ENCODE measurements at regions of chr14 and their contacts with region 1.

Region 1: GRCh38 chr14:61461808-61462275 is 140.5 kb downstream of the PRKCH start:
- DNase-seq: no peak
- H3K4me3 ChIP-seq: no peak overlapping the region
- H3K27ac ChIP-seq: no peak overlapping the region
- H3K4me1 ChIP-seq: no peaks in the 10 kb centered on the region
- H3K27me3 ChIP-seq: peaks cover 0 to 11% (median 0%) of the 10 kb centered on the region in 3 donors
- CTCF ChIP-seq: peak; percentile 64 to 76 (median 74)
- EP300 ChIP-seq: no peak
- POLR2A ChIP-seq: no peak

Region 2: GRCh38 chr14:61730756-61731373 is 269.0 kb after region 1 on chr14:
- intact Hi-C with region 1: loop called (anchors 5 kb)
- DNase-seq: no peak
- H3K4me3 ChIP-seq: no peak overlapping the region
- H3K27ac ChIP-seq: no peak overlapping the region
- H3K4me1 ChIP-seq: no peaks in the 10 kb centered on the region
- H3K27me3 ChIP-seq: no peaks in the 10 kb centered on the region
- CTCF ChIP-seq: peak in 2 of 4 experiments; percentile 26 to 43
- EP300 ChIP-seq: no peak
- POLR2A ChIP-seq: no peak

Region 3: DNA sequence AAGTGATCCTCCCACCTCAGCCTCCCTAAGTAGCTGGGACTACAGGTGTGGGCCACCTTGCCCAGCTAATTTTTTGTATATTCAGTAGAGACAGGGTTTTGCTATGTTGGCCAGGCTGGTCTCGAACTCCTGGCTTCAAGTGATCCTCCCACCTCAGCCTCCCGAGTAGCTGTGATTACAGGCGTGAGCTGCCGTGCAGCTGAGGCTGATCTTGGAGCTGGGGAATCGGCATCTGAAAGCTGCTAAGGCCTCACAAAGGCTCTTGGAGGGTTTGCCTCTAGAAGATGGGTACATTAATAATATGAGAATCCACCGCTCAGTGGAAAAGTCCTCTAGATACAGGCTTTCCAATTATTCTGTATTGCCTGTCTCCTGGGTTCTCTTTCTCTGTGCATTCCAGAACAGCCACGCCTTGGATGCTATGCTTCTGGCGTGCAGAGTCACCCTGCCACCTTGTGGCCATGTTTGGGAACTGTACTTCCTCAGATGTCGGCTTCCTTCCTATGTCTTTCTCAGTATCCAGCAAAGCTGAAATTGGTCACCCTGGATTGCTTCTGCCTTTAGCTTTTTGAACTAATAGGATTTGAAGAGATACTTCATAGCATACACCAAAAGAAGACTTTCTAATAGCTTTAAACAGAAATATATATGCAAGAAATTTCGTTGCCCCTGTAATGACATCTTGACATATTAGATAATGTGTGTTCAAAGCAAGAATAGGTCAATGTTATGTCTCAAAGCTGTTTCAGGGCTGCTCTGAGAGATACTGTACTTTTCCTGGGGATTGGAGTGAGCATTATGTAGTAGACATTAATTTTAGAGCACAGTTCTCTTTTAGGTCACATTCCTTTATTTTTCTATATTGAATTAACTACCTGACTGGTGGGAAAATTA is 375.7 kb after region 1 on chr14:
- intact Hi-C with region 1: loop called (anchors 1 kb)
- DNase-seq: peak; percentile 86
- H3K4me3 ChIP-seq: no peak overlapping the region
- H3K27ac ChIP-seq: no peak overlapping the region
- H3K4me1 ChIP-seq: no peaks in the 10 kb centered on the region
- H3K27me3 ChIP-seq: no peaks in the 10 kb centered on the region
- CTCF ChIP-seq: peak; percentile 72 to 92 (median 84)
- EP300 ChIP-seq: no peak
- POLR2A ChIP-seq: no peak